Gastrocnemius medialis (tissue), 4 donors: ENCODE measurements at regions of chr2 and their contacts with region 1.

Region 1: GRCh38 chr2:112481050-112481527 is 867 bp upstream of the TTL start:
- DNase-seq: peak; percentile 75
- ATAC-seq: peak; percentile 80 to 81
- H3K4me3 ChIP-seq: peak overlapping the region; percentile 70 to 99 (median 90)
- H3K27ac ChIP-seq: peak overlapping the region; percentile 89 to 94 (median 91)
- H3K4me1 ChIP-seq: peaks cover 16 to 18% of the 10 kb centered on the region in 2 donors
- H3K27me3 ChIP-seq: no peaks in the 10 kb centered on the region
- CTCF ChIP-seq: peak; percentile 58 to 89 (median 74)
- POLR2A ChIP-seq: no peak

Region 2: GRCh38 chr2:112275306-112275886 is 205.7 kb before region 1 on chr2 and contains the start of gene ZC3H6:
- in situ Hi-C with region 1: loop called in 1 of 4 experiments (anchors 25 kb)
- intact Hi-C with region 1: loop called (anchors 5 kb)
- DNase-seq: peak; percentile 98 to 99
- ATAC-seq: peak; percentile 93 to 94
- H3K4me3 ChIP-seq: peak within 1 kb of the TSS; percentile 88 to 97 (median 94)
- H3K27ac ChIP-seq: peak within 1 kb of the TSS; percentile 99 to 100 (median 100)
- H3K4me1 ChIP-seq: peaks cover 22 to 26% of the 10 kb centered on the region in 2 donors
- H3K27me3 ChIP-seq: no peaks in the 10 kb centered on the region
- CTCF ChIP-seq: peak in 4 of 5 experiments; percentile 32 to 49 (median 43)
- POLR2A ChIP-seq: peak; percentile 86 to 91
- total RNA-seq, gene ZC3H6: 6.3 to 15.1 (median 9.9) TPM

Region 3: DNA sequence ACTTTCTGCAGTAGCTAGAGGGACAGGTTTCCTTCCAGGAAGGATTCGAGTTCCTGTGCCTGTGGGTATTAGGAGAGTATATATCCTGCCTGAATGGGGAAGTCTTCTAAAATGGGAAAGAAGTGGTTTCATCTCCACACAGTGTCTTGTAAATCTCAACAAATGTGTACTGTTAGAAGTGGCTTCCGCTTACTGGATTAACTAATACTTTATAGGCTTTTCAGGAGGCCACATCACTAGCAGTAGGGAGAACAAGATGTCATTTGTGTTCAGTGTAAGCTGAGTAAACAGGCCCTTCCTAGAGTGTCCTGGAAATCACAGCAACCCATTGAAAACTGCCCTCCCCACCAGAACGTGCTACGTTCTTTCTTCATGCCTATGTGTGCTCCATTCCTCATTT is 48.7 kb after region 1 on chr2:
- in situ Hi-C with region 1: no loop called
- intact Hi-C with region 1: no loop called
- DNase-seq: no peak
- ATAC-seq: no peak
- H3K4me3 ChIP-seq: no peak overlapping the region
- H3K27ac ChIP-seq: no peak overlapping the region
- H3K4me1 ChIP-seq: no peaks in the 10 kb centered on the region
- H3K27me3 ChIP-seq: no peaks in the 10 kb centered on the region
- CTCF ChIP-seq: no peak
- POLR2A ChIP-seq: no peak

Region 4: GRCh38 chr2:112542123-112542983 is 61.3 kb after region 1 on chr2 and contains the start of gene POLR1B:
- in situ Hi-C with region 1: no loop called
- intact Hi-C with region 1: loop called (anchors 1 kb)
- DNase-seq: peak; percentile 79 to 85
- ATAC-seq: peak; percentile 95 to 97
- H3K4me3 ChIP-seq: peak within 1 kb of the TSS; percentile 74 to 99 (median 90)
- H3K27ac ChIP-seq: peak within 1 kb of the TSS; percentile 75 to 90 (median 88)
- H3K4me1 ChIP-seq: peaks cover 20 to 25% of the 10 kb centered on the region in 2 donors
- H3K27me3 ChIP-seq: no peaks in the 10 kb centered on the region
- CTCF ChIP-seq: no peak
- POLR2A ChIP-seq: no peak
- total RNA-seq, gene POLR1B: 13.0 to 18.1 (median 13.3) TPM